ENCODE measurements at regions of chr4 and their contacts with region 1.

Region 1: DNA sequence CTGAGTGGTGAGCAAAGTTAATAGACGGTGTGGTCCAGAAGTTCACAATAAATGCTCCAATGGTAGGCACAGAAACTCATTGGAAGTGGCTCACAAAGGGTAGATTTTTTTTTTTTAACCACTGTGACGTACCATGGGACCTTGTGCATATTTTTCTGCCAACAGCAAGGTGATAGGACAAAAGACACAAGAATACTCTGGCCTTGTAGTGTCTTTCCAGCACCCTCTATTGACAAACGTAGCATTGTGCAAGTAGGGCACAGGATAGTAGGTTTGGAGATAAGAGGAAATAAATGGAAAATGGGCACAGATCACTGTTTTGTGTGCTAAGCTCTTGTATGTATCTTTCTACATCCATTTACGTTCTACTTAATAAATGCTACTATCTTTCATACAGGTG is 2054.9 kb downstream of the PCDH7 start:
- DNase-seq: peak; percentile 59
- ATAC-seq: peak; percentile 94
- H3K4me3 ChIP-seq: no peak overlapping the region
- H3K27ac ChIP-seq: no peak overlapping the region
- H3K4me1 ChIP-seq: no peaks in the 10 kb centered on the region
- H3K27me3 ChIP-seq: no peaks in the 10 kb centered on the region
- CTCF ChIP-seq: peak; percentile 68
- EP300 ChIP-seq: no peak
- POLR2A ChIP-seq: no peak
- RAD21 ChIP-seq: peak; percentile 37; the same call in 1 of the 2 replicates

Region 2: DNA sequence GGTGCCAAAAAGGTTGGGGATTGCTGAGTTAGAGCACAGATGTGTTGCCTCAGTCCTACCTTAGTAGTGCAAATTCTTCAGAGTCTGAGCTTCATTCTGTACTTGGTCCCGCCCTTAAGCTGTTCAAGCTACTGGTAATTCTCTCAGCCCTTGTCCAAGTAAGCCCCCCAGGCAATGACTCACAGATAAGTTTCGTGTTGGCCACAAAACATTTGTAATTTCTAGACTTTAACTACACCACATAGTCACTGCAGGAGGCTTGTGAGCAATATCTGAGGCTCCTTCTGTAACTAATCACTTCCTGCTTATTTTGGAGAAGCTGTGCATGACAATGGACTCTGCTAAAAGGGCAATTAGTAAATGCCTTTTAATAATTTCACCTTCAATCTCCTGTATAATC is 634.4 kb before region 1 on chr4:
- CTCF ChIA-PET with region 1: no interaction called
- POLR2A ChIA-PET with region 1: no interaction called
- in situ Hi-C with region 1: no loop called
- intact Hi-C with region 1: loop called (anchors 10 kb)
- DNase-seq: no peak
- ATAC-seq: no peak
- H3K4me3 ChIP-seq: no peak overlapping the region
- H3K27ac ChIP-seq: no peak overlapping the region
- H3K4me1 ChIP-seq: no peaks in the 10 kb centered on the region
- H3K27me3 ChIP-seq: no peaks in the 10 kb centered on the region
- CTCF ChIP-seq: no peak
- EP300 ChIP-seq: no peak
- POLR2A ChIP-seq: no peak
- RAD21 ChIP-seq: no peak

Region 3: DNA sequence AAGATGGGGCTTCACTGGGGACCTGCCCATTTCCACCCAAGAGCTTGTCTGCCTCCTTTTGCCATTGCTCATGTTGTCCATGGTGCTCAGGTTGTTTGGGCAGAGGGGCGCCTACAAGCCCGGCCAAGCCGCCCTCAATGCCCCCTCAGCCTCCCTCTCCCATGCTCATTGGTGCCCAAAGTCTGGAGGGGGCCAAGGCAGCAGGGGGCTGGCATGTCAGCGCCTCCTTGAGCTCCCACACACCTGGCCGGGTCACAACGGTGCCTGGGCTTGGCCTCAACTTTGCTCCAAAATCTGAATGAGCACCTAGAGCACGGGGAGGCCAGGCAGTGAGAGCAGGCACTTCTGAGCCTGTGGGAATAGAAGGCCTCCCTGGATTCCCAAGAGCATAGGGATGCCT is 456.1 kb before region 1 on chr4:
- CTCF ChIA-PET with region 1: no interaction called
- POLR2A ChIA-PET with region 1: no interaction called
- in situ Hi-C with region 1: no loop called
- intact Hi-C with region 1: no loop called
- DNase-seq: no peak
- ATAC-seq: no peak
- H3K4me3 ChIP-seq: no peak overlapping the region
- H3K27ac ChIP-seq: no peak overlapping the region
- H3K4me1 ChIP-seq: no peaks in the 10 kb centered on the region
- H3K27me3 ChIP-seq: no peaks in the 10 kb centered on the region
- CTCF ChIP-seq: no peak
- EP300 ChIP-seq: no peak
- POLR2A ChIP-seq: no peak
- RAD21 ChIP-seq: no peak

Region 4: DNA sequence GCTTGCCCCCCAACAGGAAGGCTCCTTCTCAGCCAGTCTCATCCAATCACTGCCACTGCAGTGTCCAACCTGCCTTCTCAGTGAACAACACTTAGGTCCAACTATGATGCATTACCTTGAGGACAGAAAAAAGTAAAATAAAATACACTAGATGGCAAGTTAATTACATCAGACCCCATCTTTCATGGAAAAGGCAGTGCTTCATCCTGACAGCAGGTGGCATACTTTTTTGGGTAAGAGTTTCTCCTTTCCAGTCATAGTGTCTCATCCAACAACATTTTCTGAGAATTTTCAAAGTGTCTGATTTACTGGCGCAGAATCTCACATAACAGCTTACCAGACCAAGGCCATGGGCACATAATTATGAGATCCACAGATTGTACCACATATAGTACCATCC is 312.1 kb before region 1 on chr4:
- CTCF ChIA-PET with region 1: interaction called, 13 read pairs
- POLR2A ChIA-PET with region 1: no interaction called
- in situ Hi-C with region 1: loop called (anchors 5 kb)
- intact Hi-C with region 1: loop called (anchors 1 kb)
- DNase-seq: peak; percentile 22
- ATAC-seq: no peak
- H3K4me3 ChIP-seq: no peak overlapping the region
- H3K27ac ChIP-seq: no peak overlapping the region
- H3K4me1 ChIP-seq: no peaks in the 10 kb centered on the region
- H3K27me3 ChIP-seq: no peaks in the 10 kb centered on the region
- CTCF ChIP-seq: peak; percentile 51
- EP300 ChIP-seq: no peak
- POLR2A ChIP-seq: no peak
- RAD21 ChIP-seq: no peak

Region 5: GRCh38 chr4:33013282-33013681 is 238.2 kb after region 1 on chr4:
- CTCF ChIA-PET with region 1: no interaction called
- POLR2A ChIA-PET with region 1: no interaction called
- in situ Hi-C with region 1: no loop called
- intact Hi-C with region 1: no loop called
- DNase-seq: no peak
- ATAC-seq: no peak
- H3K4me3 ChIP-seq: no peak overlapping the region
- H3K27ac ChIP-seq: no peak overlapping the region
- H3K4me1 ChIP-seq: no peaks in the 10 kb centered on the region
- H3K27me3 ChIP-seq: no peaks in the 10 kb centered on the region
- CTCF ChIP-seq: no peak
- EP300 ChIP-seq: no peak
- POLR2A ChIP-seq: no peak
- RAD21 ChIP-seq: no peak